ENCODE measurements at regions of chr14 and their contacts with region 1.

Region 1: GRCh38 chr14:24332268-24332993 is 2.4 kb downstream of the ADCY4 start:
- DNase-seq: peak; percentile 21 to 77
- H3K4me3 ChIP-seq: no peak overlapping the region
- H3K4me1 ChIP-seq: peaks cover 3% of the 10 kb centered on the region; the same call in 1 of the 2 replicates
- H3K27me3 ChIP-seq: no peaks in the 10 kb centered on the region

Region 2: DNA sequence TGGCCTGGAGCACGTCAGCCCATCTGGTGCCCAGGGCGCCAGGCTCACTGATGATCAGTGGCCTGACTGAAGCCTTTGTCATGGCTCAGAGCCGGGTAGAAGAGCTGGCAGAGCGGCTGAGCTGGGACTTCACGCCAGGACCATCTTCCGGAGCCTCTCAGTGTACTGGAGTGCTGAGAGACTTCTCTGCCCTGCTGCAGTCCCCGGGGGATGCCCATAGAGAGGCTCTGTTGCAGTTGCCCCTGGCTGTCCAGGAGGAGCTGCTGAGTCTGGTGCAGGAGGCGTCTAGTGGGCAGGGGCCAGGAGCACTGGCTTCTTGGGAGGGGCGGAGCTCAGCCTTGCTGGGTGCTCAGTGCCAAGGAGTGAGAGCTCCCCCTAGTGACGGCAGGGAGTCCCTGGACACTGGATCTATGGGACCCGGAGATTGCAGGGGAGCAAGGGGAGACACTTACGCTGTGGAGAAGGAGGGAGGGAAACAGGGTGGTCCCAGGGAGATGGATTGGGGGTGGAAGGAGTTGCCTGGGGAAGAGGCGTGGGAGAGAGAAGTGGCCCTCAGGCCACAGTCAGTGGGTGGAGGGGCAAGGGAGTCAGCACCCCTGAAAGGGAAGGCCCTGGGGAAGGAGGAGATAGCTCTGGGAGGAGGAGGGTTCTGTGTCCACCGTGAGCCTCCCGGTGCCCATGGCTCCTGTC is 99.3 kb after region 1 on chr14:
- in situ Hi-C with region 1: loop called (anchors 5 kb)
- DNase-seq: peak; percentile 92 to 97
- H3K4me3 ChIP-seq: no peak overlapping the region; the same call in 1 of the 2 replicates
- H3K4me1 ChIP-seq: peaks cover 13% of the 10 kb centered on the region
- H3K27me3 ChIP-seq: no peaks in the 10 kb centered on the region

Region 3: GRCh38 chr14:24513009-24513408 is 180.6 kb after region 1 on chr14:
- in situ Hi-C with region 1: no loop called
- DNase-seq: no peak
- H3K4me3 ChIP-seq: no peak overlapping the region
- H3K4me1 ChIP-seq: no peaks in the 10 kb centered on the region
- H3K27me3 ChIP-seq: no peaks in the 10 kb centered on the region

Region 4: DNA sequence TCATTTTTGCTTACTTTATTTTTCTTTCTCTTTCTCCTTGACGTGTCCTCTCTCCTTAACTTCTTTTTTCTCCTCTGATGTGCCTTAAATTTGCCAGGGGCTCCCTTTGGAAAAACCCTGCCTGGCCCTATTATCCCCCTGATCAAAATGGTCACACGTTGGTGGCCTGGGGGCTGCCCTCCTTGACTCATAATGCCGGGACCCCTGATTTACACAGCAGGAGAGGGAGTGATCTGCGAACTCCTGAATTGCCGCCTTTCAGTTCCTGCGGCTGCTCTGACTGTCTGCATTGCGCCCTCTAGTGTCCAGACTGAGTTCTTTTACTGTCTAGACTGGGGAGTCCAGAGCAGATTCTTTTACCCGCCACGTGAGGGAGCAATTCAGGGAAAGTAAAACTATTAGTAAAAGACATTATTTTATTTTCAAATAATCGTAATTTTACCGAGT is 346.4 kb after region 1 on chr14:
- in situ Hi-C with region 1: loop called (anchors 25 kb)
- DNase-seq: peak; percentile 83 to 84
- H3K4me3 ChIP-seq: no peak overlapping the region
- H3K4me1 ChIP-seq: no peaks in the 10 kb centered on the region
- H3K27me3 ChIP-seq: peaks cover 3% of the 10 kb centered on the region; the same call in 1 of the 2 replicates

Region 5: DNA sequence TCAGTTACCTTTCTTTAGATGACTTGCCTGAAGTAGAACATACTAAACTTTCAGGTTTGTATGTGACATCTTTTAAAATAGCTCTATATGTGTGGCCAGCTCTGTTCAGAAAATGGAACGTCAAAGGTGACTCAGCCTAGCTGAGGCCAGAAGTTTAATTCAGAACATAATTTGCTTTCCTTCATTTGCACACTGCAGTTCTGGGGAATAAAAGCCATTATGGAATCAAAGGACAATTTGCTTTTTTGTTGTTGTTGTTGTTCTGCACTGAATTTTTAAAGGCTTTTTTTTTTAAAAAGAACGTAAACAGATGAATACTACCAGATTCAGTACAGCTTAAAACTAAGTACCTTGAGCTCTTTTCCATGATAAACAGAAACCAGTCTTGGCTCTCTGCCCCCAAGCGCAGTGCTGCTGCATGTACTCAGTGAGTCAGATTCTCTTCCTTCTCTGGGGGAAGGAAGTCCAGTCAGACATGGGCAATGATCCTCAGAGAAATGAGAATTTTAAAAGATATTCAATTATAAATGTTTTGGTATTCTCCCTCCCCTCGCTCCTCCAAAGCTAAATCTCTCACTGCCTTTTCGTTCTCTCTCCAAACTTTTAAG is 1621.2 kb after region 1 on chr14:
- in situ Hi-C with region 1: no loop called
- DNase-seq: no peak
- H3K4me3 ChIP-seq: no peak overlapping the region
- H3K4me1 ChIP-seq: no peaks in the 10 kb centered on the region
- H3K27me3 ChIP-seq: no peaks in the 10 kb centered on the region

Measured in HAP-1 (cell line).